AG04449 (cell line): ENCODE measurements at regions of chr5 and their contacts with region 1.

Region 1: GRCh38 chr5:35777358-35778087 is 79.2 kb upstream of the IL7R start:
- DNase-seq: peak; percentile 41
- H3K4me3 ChIP-seq: no peak overlapping the region
- CTCF ChIP-seq: peak; percentile 51

Region 2: DNA sequence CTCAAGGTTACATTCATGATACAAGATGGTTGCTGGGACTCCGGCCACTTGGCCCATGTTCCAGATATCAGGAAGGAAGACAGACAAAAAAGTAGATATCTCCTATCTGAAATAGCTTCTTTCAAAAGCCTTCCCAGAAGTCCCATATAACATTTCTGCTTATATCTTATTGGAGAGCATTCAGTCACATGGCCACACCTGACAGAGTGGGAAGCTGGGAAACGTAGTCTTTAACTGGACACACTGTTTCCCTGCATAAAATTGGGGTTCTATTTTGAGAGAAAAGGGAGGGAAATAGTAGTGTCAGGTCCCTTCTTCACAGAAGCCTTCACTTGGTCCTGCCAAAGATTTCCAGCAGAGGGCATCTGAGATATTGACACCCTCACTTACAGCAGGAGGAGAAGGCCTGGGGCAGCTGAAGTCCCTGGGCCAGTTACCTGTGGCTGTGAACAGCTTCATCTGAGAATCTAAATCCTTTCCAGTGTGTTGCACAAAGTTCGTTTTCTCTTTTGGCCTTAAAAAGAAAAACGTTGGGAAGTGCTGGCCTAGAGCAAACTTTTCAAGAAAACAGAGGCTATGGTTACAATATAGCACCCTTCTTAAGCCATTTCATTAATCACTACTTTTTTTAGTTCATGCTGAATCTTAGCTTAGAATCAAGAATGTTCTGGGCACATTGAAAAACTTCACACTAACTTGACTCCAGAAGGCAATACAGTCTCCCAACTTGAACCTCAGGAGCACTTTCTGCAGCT is 126.3 kb before region 1 on chr5:
- CTCF ChIA-PET with region 1: interaction called, 27 read pairs
- POLR2A ChIA-PET with region 1: no interaction called
- DNase-seq: no peak
- H3K4me3 ChIP-seq: no peak overlapping the region
- CTCF ChIP-seq: peak; percentile 75

Region 3: GRCh38 chr5:35803191-35803651 is 25.7 kb after region 1 on chr5:
- CTCF ChIA-PET with region 1: interaction called, 14 read pairs
- POLR2A ChIA-PET with region 1: no interaction called
- DNase-seq: no peak
- H3K4me3 ChIP-seq: no peak overlapping the region
- CTCF ChIP-seq: no peak

Region 4: GRCh38 chr5:35813521-35813920 is 36.0 kb after region 1 on chr5:
- CTCF ChIA-PET with region 1: interaction called, 10 read pairs
- POLR2A ChIA-PET with region 1: no interaction called
- DNase-seq: no peak
- H3K4me3 ChIP-seq: no peak overlapping the region
- CTCF ChIP-seq: no peak

Region 5: DNA sequence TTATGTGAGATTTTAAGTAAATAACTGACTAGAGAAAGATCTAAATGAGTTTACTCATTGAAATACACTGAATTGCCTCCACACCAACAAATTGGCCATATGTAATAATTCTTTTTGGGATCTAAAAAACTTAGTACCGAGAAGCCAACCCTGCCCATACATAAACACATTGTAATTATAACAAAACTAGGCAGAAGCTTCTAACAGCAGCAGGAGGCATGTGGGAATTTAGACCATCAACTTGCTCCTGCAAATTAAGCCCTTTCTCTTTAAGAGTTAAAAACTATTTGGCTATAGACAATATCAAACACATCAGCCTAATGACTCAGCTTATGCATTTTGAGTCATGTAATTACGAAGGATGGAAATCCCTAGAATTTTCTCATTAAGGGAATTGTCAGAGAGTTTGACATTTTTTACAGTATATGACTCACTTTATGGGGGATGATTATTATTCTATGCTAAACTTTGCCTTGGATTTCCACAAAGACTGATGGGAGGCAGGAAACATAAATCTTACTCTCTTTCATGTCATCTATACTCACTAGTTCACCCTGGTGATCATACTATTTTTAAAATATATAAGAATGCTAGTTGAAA is 80.2 kb after region 1 on chr5:
- CTCF ChIA-PET with region 1: interaction called, 11 read pairs
- POLR2A ChIA-PET with region 1: no interaction called
- DNase-seq: peak; percentile 80
- H3K4me3 ChIP-seq: peak overlapping the region; percentile 18
- CTCF ChIP-seq: no peak

Region 6: DNA sequence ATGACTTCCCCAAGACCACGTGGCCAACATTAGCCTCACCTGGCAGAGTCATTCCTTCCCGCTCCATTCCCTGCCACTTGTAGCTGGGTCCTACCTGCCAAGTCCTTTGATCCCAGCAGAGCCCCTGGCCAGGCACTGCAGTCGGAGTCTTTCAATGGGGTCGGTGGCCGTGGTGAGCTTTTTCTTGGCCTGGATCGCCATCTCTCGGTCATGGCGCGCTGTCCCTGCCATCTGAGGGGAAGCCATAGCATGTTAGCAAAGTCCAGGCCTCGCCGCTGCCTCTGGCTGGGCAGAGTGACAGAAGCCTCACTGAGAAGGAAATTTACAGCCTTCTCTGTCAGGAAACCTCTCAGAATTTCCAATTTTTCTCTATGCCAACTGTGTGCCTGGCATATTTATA is 143.4 kb after region 1 on chr5:
- CTCF ChIA-PET with region 1: interaction called, 208 read pairs
- POLR2A ChIA-PET with region 1: no interaction called
- DNase-seq: no peak
- H3K4me3 ChIP-seq: no peak overlapping the region
- CTCF ChIP-seq: peak; percentile 36